HepG2 (cell line): ENCODE measurements at regions of chr12 and their contacts with region 1.

Region 1: DNA sequence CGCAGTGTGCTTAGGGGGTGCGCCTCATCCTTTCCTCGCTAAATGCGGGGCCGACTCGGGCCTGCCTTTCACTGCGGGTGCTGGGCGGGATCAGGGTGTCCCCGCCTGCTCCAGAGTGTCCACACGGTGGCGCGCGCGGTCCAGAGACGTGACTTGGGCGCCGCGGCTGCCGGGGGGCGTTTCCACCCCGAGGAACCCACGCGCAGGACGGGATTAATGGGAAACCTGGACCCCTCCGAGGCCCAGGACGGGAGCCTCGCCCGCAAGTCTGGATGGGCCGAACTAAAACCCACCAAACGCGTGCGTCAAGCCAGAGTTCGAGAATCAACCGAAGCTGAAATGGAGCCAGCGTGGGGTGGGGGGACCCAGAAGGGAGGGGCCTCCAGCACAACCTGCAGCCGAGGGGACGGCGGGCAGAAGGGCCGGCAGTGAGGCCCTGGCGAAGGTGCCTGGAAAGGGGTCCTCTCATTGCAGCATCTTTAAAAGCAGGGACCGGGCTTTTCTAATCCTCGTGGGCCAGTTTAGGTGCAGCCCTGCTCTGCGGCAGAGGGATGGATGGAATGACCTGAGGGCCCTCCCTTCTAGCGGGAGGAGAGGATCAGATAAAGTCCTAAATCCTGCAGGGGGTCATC is 93.3 kb downstream of the NINJ2 start:
- DNase-seq: peak; percentile 66
- ATAC-seq: peak; percentile 71
- H3K4me3 ChIP-seq: peak overlapping the region; percentile 67 to 80 (median 73)
- H3K27ac ChIP-seq: peak overlapping the region; percentile 86
- H3K4me1 ChIP-seq: peaks cover 49% of the 10 kb centered on the region
- H3K27me3 ChIP-seq: no peaks in the 10 kb centered on the region; a peak in 1 of 5 replicates
- CTCF ChIP-seq: peak; percentile 99
- EP300 ChIP-seq: peak in 1 of 2 experiments; percentile 25; a peak in 1 of 4 replicates
- POLR2A ChIP-seq: no peak
- RAD21 ChIP-seq: peak; percentile 97

Region 2: GRCh38 chr12:583234-583869 is 13.4 kb after region 1 on chr12:
- CTCF ChIA-PET with region 1: no interaction called
- POLR2A ChIA-PET with region 1: interaction called, 11 read pairs
- in situ Hi-C with region 1: no loop called
- intact Hi-C with region 1: no loop called
- DNase-seq: peak; percentile 84
- ATAC-seq: peak; percentile 84
- H3K4me3 ChIP-seq: peak overlapping the region in 1 of 3 experiments; percentile 39; a peak in 1 of 6 replicates
- H3K27ac ChIP-seq: peak overlapping the region; percentile 88
- H3K4me1 ChIP-seq: peaks cover 97% of the 10 kb centered on the region
- H3K27me3 ChIP-seq: no peaks in the 10 kb centered on the region
- CTCF ChIP-seq: peak; percentile 35; the same call in 1 of the 2 replicates
- EP300 ChIP-seq: peak in 1 of 2 experiments; percentile 82; a peak in 2 of 4 replicates
- POLR2A ChIP-seq: peak in 1 of 2 experiments; percentile 38; a peak in 1 of 4 replicates
- RAD21 ChIP-seq: peak; percentile 54; the same call in 1 of the 2 replicates

Region 3: GRCh38 chr12:770479-770878 is 200.6 kb after region 1 on chr12:
- CTCF ChIA-PET with region 1: no interaction called
- POLR2A ChIA-PET with region 1: no interaction called
- in situ Hi-C with region 1: no loop called
- intact Hi-C with region 1: no loop called
- DNase-seq: no peak
- ATAC-seq: no peak
- H3K4me3 ChIP-seq: no peak overlapping the region
- H3K27ac ChIP-seq: no peak overlapping the region
- H3K4me1 ChIP-seq: peaks cover 35% of the 10 kb centered on the region
- H3K27me3 ChIP-seq: no peaks in the 10 kb centered on the region; a peak in 1 of 5 replicates
- CTCF ChIP-seq: no peak
- EP300 ChIP-seq: no peak
- POLR2A ChIP-seq: no peak
- RAD21 ChIP-seq: no peak

Region 4: GRCh38 chr12:810671-811415 is 240.9 kb after region 1 on chr12:
- CTCF ChIA-PET with region 1: interaction called, 6 read pairs
- POLR2A ChIA-PET with region 1: no interaction called
- in situ Hi-C with region 1: loop called (anchors 10 kb)
- intact Hi-C with region 1: loop called (anchors 2 kb)
- DNase-seq: no peak
- ATAC-seq: no peak
- H3K4me3 ChIP-seq: no peak overlapping the region
- H3K27ac ChIP-seq: no peak overlapping the region
- H3K4me1 ChIP-seq: peaks cover 14% of the 10 kb centered on the region
- H3K27me3 ChIP-seq: no peaks in the 10 kb centered on the region
- CTCF ChIP-seq: no peak
- EP300 ChIP-seq: no peak
- POLR2A ChIP-seq: no peak
- RAD21 ChIP-seq: no peak

Region 5: DNA sequence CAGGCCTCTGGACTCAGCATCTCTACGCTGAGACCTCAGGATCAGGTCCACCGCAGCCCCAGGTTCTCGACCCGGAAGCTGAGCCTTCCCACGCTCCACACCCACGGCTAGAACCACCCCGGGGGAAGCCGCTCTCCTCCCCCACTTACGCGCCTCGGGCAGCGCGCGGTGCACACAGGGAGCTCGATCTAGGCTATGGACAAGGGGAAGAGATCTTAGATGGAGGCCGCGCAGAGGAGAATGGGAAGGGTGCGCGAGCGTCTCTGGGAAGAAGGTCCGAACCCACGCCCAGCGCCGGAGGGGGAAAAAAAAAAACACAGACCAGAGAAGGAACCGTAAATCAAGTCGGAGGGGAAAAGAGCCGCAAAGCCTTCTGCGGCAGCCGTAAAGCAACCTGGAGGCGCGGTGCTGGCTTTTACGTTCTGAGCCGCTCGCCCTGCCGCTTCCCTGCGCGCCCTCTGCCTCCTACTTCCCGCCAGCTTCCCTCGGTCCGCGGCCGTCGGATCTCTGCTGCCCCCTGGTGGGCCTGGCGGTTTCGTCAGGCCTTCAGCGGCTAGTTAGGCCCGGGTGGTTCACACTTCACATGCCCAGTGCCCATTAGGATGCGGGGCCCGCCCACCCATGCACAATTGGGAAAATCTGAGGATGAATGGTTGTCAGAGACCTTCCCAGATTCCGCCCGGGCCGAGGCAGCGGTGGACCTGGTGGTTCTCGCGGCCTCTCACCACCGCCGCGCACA is 379.7 kb after region 1 on chr12 and contains the start of gene RAD52:
- CTCF ChIA-PET with region 1: interaction called, 14 read pairs
- POLR2A ChIA-PET with region 1: interaction called, 12 read pairs
- in situ Hi-C with region 1: loop called (anchors 5 kb)
- intact Hi-C with region 1: loop called (anchors 2 kb)
- DNase-seq: peak; percentile 96
- ATAC-seq: peak; percentile 92
- H3K4me3 ChIP-seq: peak within 1 kb of the TSS; percentile 78 to 85 (median 78)
- H3K27ac ChIP-seq: peak within 1 kb of the TSS; percentile 82
- H3K4me1 ChIP-seq: peaks cover 52% of the 10 kb centered on the region
- H3K27me3 ChIP-seq: no peaks in the 10 kb centered on the region; a peak in 1 of 5 replicates
- CTCF ChIP-seq: peak; percentile 99
- EP300 ChIP-seq: peak in 1 of 2 experiments; percentile 45; a peak in 2 of 4 replicates
- POLR2A ChIP-seq: peak; percentile 65 to 91; a peak in 3 of 4 replicates
- RAD21 ChIP-seq: peak; percentile 94
- total RNA-seq, gene RAD52: 13.5 and 19.9 TPM in 2 replicates

Region 6: GRCh38 chr12:1594261-1595025 is 1024.5 kb after region 1 on chr12 and contains the start of gene FBXL14:
- CTCF ChIA-PET with region 1: no interaction called
- POLR2A ChIA-PET with region 1: no interaction called
- in situ Hi-C with region 1: loop called (anchors 25 kb)
- intact Hi-C with region 1: no loop called
- DNase-seq: peak; percentile 74
- ATAC-seq: peak; percentile 82
- H3K4me3 ChIP-seq: peak within 1 kb of the TSS; percentile 66 to 83 (median 75)
- H3K27ac ChIP-seq: peak within 1 kb of the TSS; percentile 73
- H3K4me1 ChIP-seq: peaks cover 52% of the 10 kb centered on the region
- H3K27me3 ChIP-seq: peaks cover 0 to 4% of the 10 kb centered on the region in 2 experiments; a peak in 2 of 5 replicates
- CTCF ChIP-seq: peak; percentile 34
- EP300 ChIP-seq: 0 out of 4 replicates have a peak, but pooled peaks of 1 of the 2 experiments have one; percentile 12
- POLR2A ChIP-seq: no peak; a peak in 1 of 4 replicates
- RAD21 ChIP-seq: peak; percentile 47
- total RNA-seq, gene FBXL14: 5.5 and 7.0 TPM in 2 replicates